ENCODE measurements at regions of chr10 and their contacts with region 1.

Region 1: GRCh38 chr10:13840036-13840435 is 253.3 kb downstream of the PRPF18 start:
- DNase-seq: no peak
- H3K4me3 ChIP-seq: no peak overlapping the region
- H3K27ac ChIP-seq: no peak overlapping the region
- H3K4me1 ChIP-seq: no peaks in the 10 kb centered on the region
- H3K27me3 ChIP-seq: no peaks in the 10 kb centered on the region
- CTCF ChIP-seq: no peak

Region 2: DNA sequence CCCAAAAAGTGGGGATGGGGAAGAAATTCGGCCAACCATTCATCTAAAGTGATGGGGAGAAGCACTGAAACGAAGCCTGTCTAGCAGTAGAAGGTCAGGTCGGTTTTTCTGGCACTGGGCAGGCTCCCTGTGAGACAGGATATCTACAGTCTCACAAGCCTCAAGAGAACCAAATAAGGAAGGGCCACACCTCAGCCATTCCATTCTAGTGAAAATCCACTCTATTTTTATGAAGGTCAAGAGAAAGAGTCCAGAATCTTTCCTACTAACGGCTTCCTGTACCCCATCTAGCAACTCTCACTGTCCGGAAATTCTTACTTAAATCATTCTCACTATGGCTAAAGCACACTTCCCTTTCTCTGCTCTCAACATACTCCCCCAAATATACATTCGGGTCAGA is 13.8 kb after region 1 on chr10:
- CTCF ChIA-PET with region 1: no interaction called
- POLR2A ChIA-PET with region 1: interaction called, 12 read pairs
- intact Hi-C with region 1: no loop called
- DNase-seq: no peak
- H3K4me3 ChIP-seq: no peak overlapping the region
- H3K27ac ChIP-seq: no peak overlapping the region
- H3K4me1 ChIP-seq: no peaks in the 10 kb centered on the region
- H3K27me3 ChIP-seq: peaks cover 6% of the 10 kb centered on the region
- CTCF ChIP-seq: no peak

Region 3: GRCh38 chr10:14003517-14004184 is 163.6 kb after region 1 on chr10:
- CTCF ChIA-PET with region 1: no interaction called
- POLR2A ChIA-PET with region 1: no interaction called
- intact Hi-C with region 1: no loop called
- DNase-seq: no peak
- H3K4me3 ChIP-seq: no peak overlapping the region
- H3K27ac ChIP-seq: no peak overlapping the region
- H3K4me1 ChIP-seq: no peaks in the 10 kb centered on the region
- H3K27me3 ChIP-seq: peaks cover 3% of the 10 kb centered on the region
- CTCF ChIP-seq: no peak

Measured in A673 (cell line).